Gastrocnemius medialis (tissue), 4 donors: ENCODE measurements at regions of chr2 and their contacts with region 1.

Region 1: GRCh38 chr2:191691016-191691735 is 13.2 kb downstream of the NABP1 start:
- DNase-seq: peak in 1 of 2 donors; percentile 17
- ATAC-seq: peak; percentile 87 to 92
- H3K4me3 ChIP-seq: peak overlapping the region in 1 of 4 donors; percentile 7
- H3K27ac ChIP-seq: no peak overlapping the region
- H3K4me1 ChIP-seq: peaks cover 7 to 15% of the 10 kb centered on the region in 2 donors
- H3K27me3 ChIP-seq: no peaks in the 10 kb centered on the region
- CTCF ChIP-seq: peak; percentile 44 to 75 (median 65)
- POLR2A ChIP-seq: no peak

Region 2: GRCh38 chr2:190940454-190940853 is 750.7 kb before region 1 on chr2:
- in situ Hi-C with region 1: no loop called
- intact Hi-C with region 1: no loop called
- DNase-seq: no peak
- ATAC-seq: no peak
- H3K4me3 ChIP-seq: no peak overlapping the region
- H3K27ac ChIP-seq: no peak overlapping the region
- H3K4me1 ChIP-seq: peaks cover 19 to 21% of the 10 kb centered on the region in 2 donors
- H3K27me3 ChIP-seq: no peaks in the 10 kb centered on the region
- CTCF ChIP-seq: no peak
- POLR2A ChIP-seq: no peak

Region 3: DNA sequence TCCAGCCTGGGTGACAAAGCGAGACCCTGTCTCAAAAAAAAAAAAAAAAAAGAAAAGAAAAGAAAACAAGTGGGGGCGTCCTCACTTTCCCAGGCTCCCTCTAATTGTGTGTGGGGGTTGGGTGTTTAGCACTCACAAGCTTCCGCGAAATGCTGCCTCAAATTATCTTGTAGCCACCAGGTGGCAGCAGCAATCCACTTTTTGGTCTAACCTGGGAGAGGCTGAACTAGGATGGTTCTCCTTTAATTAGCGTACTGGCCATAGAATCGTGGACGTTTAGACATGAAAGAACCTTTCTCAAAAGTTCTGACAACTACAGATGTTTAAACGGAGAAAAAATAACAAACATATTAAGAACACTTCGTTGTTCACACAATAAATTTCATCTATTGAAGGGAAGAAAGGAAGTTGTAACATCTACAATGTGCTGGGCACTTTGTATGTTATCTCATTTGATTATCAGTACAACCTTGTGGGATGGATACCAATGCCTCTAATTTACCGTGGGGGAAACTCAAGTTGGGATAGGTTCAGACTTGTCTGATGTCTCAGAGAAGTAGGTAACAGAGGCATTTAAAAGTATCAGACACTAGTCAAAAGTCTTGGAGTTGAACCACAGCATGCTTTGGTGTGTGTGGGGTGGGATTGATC is 136.0 kb before region 1 on chr2:
- in situ Hi-C with region 1: loop called in 1 of 4 experiments (anchors 5 kb)
- intact Hi-C with region 1: no loop called
- DNase-seq: peak; percentile 55 to 62
- ATAC-seq: peak; percentile 94 to 96
- H3K4me3 ChIP-seq: no peak overlapping the region
- H3K27ac ChIP-seq: no peak overlapping the region
- H3K4me1 ChIP-seq: no peaks in the 10 kb centered on the region
- H3K27me3 ChIP-seq: no peaks in the 10 kb centered on the region
- CTCF ChIP-seq: peak; percentile 57 to 73 (median 64)
- POLR2A ChIP-seq: no peak

Region 4: GRCh38 chr2:191566344-191566743 is 124.8 kb before region 1 on chr2:
- in situ Hi-C with region 1: loop called in 3 of 4 experiments (anchors 5 kb)
- intact Hi-C with region 1: loop called (anchors 1 kb)
- DNase-seq: peak; percentile 13 to 41
- ATAC-seq: peak in 1 of 2 donors; percentile 78
- H3K4me3 ChIP-seq: no peak overlapping the region
- H3K27ac ChIP-seq: no peak overlapping the region
- H3K4me1 ChIP-seq: no peaks in the 10 kb centered on the region
- H3K27me3 ChIP-seq: no peaks in the 10 kb centered on the region
- CTCF ChIP-seq: peak; percentile 29 to 78 (median 63)
- POLR2A ChIP-seq: no peak

Region 5: DNA sequence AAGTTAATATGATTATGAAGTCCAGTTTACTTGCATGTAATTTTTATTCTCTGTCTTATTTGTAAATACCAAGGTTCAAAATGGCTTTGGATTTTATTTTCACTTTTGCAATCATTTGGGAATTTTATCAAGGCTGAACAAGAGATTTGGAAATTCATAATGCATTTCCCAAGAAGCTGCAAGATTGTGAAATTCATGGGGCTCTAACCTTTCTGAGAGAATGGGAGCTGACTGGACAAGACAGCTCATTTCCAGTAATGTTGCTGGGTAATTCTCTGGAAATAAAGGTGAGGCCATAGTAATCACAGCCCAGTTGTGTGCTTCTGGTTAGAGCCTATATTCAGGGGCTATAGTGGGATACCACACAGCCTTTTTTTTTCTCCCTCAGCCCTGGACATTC is 34.8 kb before region 1 on chr2:
- in situ Hi-C with region 1: no loop called
- intact Hi-C with region 1: no loop called
- DNase-seq: no peak
- ATAC-seq: peak; percentile 36 to 64
- H3K4me3 ChIP-seq: no peak overlapping the region
- H3K27ac ChIP-seq: no peak overlapping the region
- H3K4me1 ChIP-seq: no peaks in the 10 kb centered on the region
- H3K27me3 ChIP-seq: no peaks in the 10 kb centered on the region
- CTCF ChIP-seq: no peak
- POLR2A ChIP-seq: no peak